SK-N-SH (cell line): ENCODE measurements at regions of chr4 and their contacts with region 1.

Region 1: DNA sequence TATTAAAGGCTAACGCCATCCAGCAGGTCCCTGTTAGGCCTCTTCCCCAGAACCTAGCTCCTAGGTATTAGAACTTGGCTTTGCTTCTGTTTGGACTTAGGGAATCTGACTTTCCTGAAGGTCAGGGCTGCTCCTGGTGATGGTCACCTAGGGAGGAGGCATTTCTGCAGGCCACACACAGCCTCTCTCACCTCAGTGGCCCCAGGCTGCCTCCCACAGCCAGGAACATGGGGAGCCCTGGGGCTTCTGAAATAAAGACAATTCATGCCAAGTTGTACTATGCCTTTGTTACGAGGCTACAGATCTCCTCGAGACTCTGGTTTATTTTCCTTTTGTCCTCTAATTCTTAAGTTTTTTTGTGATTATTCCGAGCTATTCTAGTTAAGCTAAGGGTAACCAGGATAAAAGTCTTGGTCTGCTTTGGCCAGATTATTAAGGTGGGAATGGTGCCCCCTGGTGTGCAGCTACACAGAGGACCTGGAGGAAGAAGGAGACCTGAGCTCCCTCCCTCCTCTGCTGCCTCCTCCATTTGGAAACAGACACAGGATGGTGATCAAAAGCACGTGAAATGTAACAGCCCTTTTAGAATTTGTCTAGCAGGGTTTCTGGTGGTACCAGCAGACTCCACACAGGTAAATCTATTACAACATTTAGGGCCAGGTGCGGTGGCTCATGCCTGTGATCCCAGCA is 131.0 kb downstream of the DCLK2 start:
- DNase-seq: peak; percentile 56
- H3K4me3 ChIP-seq: no peak overlapping the region
- H3K27ac ChIP-seq: no peak overlapping the region
- H3K4me1 ChIP-seq: peaks cover 19 to 31% of the 10 kb centered on the region in 2 experiments; a peak in 3 of 4 replicates
- H3K27me3 ChIP-seq: no peaks in the 10 kb centered on the region
- CTCF ChIP-seq: peak; percentile 71
- EP300 ChIP-seq: no peak
- RAD21 ChIP-seq: peak; percentile 84

Region 2: GRCh38 chr4:149999485-150000074 is 209.7 kb before region 1 on chr4:
- CTCF ChIA-PET with region 1: interaction called, 17 read pairs
- POLR2A ChIA-PET with region 1: no interaction called
- DNase-seq: peak; percentile 34
- H3K4me3 ChIP-seq: no peak overlapping the region; a peak in 1 of 4 replicates
- H3K27ac ChIP-seq: no peak overlapping the region
- H3K4me1 ChIP-seq: peaks cover 6 to 31% of the 10 kb centered on the region in 2 experiments; a peak in 3 of 4 replicates
- H3K27me3 ChIP-seq: no peaks in the 10 kb centered on the region
- CTCF ChIP-seq: peak; percentile 96
- EP300 ChIP-seq: 0 out of 4 replicates have a peak, but pooled peaks of 1 of the 2 experiments have one; percentile 6
- RAD21 ChIP-seq: peak; percentile 98

Region 3: GRCh38 chr4:150010525-150011126 is 198.7 kb before region 1 on chr4:
- CTCF ChIA-PET with region 1: interaction called, 87 read pairs
- POLR2A ChIA-PET with region 1: no interaction called
- DNase-seq: peak; percentile 23
- H3K4me3 ChIP-seq: no peak overlapping the region
- H3K27ac ChIP-seq: no peak overlapping the region; a peak in 1 of 4 replicates
- H3K4me1 ChIP-seq: peaks cover 6 to 24% of the 10 kb centered on the region in 2 experiments
- H3K27me3 ChIP-seq: no peaks in the 10 kb centered on the region
- CTCF ChIP-seq: peak; percentile 71
- EP300 ChIP-seq: no peak
- RAD21 ChIP-seq: peak; percentile 83

Region 4: DNA sequence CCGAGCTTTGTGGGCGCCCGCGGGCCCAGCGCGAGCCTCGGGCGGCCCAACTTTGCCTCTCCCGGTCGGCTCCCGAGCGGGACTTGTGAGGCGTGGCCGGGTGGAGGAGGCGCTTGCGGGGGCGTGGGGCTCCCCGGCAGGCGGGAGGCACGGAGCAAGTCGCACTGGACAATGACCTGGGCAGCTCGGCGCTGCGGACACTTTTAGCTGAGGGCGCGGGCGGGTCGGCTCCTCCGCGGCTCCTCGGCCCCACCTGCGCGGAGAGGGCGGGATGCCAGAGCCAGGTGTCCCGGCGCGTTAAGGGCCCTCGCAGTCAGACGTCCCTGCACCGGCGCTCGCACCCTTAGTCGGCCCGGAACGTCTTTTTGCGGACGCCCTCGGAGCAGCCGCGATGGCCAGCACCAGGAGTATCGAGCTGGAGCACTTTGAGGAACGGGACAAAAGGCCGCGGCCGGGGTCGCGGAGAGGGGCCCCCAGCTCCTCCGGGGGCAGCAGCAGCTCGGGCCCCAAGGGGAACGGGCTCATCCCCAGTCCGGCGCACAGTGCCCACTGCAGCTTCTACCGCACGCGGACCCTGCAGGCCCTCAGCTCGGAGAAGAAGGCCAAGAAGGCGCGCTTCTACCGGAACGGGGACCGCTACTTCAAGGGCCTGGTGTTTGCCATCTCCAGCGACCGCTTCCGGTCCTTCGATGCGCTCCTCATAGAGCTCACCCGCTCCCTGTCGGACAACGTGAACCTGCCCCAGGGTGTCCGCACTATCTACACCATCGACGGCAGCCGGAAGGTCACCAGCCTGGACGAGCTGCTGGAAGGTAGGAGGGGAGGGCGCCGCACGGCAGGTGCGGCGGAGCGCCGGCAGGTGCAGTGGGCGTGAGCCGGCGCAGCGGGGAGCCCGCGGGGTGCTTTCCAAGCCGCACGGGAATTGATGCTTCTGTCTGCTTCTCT is 130.4 kb before region 1 on chr4:
- CTCF ChIA-PET with region 1: interaction called, 16 read pairs
- POLR2A ChIA-PET with region 1: interaction called, 4 read pairs
- DNase-seq: peak; percentile 87
- H3K4me3 ChIP-seq: peak overlapping the region; percentile 83 to 92
- H3K27ac ChIP-seq: peak overlapping the region; percentile 83 to 93
- H3K4me1 ChIP-seq: peaks cover 12 to 22% of the 10 kb centered on the region in 2 experiments
- H3K27me3 ChIP-seq: no peaks in the 10 kb centered on the region
- CTCF ChIP-seq: 0 out of 2 replicates have a peak, but pooled peaks have one; percentile 23
- EP300 ChIP-seq: no peak
- RAD21 ChIP-seq: peak; percentile 29

Region 5: DNA sequence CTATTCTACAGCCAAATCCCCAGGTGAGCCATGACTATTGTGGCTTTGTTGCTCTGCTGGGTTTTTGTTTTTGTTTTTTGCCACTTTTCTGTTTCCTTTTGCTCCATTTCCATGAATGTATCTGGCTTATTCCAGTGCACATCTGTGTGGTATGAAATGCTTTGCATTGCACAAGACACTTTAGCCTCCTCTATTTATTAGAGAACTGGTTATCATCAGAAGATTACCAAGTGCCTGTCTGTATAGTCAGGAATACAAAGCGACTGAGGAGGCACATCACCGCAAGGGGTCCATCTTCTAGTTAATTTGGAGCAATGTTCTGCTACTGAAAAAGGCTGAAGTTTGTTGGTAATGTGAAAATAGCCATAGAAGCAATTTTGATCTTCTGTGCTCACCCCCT is 10.2 kb before region 1 on chr4:
- CTCF ChIA-PET with region 1: interaction called, 12 read pairs
- POLR2A ChIA-PET with region 1: no interaction called
- DNase-seq: no peak
- H3K4me3 ChIP-seq: no peak overlapping the region
- H3K27ac ChIP-seq: no peak overlapping the region
- H3K4me1 ChIP-seq: peaks cover 0 to 2% of the 10 kb centered on the region in 2 experiments; a peak in 2 of 4 replicates
- H3K27me3 ChIP-seq: no peaks in the 10 kb centered on the region
- CTCF ChIP-seq: no peak
- EP300 ChIP-seq: no peak
- RAD21 ChIP-seq: no peak